Activated CD4-positive, alpha-beta memory T cell treated with anti-CD3 and anti-CD28 coated beads, Interleukin-2, amount 10 ng/mL, durations not matched to agents 7 days and 5 days (primary cell): ENCODE measurements at regions of chr12 and their contacts with region 1.

Region 1: GRCh38 chr12:50986966-50987737 is 34.8 kb downstream of the HIGD1C start:
- DNase-seq: peak; percentile 20
- H3K4me3 Mint-ChIP-seq: no peak overlapping the region
- H3K27ac Mint-ChIP-seq: no peak overlapping the region
- H3K4me1 Mint-ChIP-seq: peaks cover 21% of the 10 kb centered on the region
- H3K27me3 Mint-ChIP-seq: no peaks in the 10 kb centered on the region

Region 2: GRCh38 chr12:50825372-50825838 is 161.7 kb before region 1 on chr12:
- CTCF ChIA-PET with region 1: interaction called, 46 read pairs
- POLR2A ChIA-PET with region 1: interaction called, 3 read pairs
- DNase-seq: no peak
- H3K4me3 Mint-ChIP-seq: no peak overlapping the region
- H3K27ac Mint-ChIP-seq: no peak overlapping the region
- H3K4me1 Mint-ChIP-seq: peaks cover 5% of the 10 kb centered on the region
- H3K27me3 Mint-ChIP-seq: no peaks in the 10 kb centered on the region

Region 3: GRCh38 chr12:50918584-50919316 is 68.4 kb before region 1 on chr12:
- CTCF ChIA-PET with region 1: no interaction called
- POLR2A ChIA-PET with region 1: no interaction called
- DNase-seq: no peak
- H3K4me3 Mint-ChIP-seq: no peak overlapping the region
- H3K27ac Mint-ChIP-seq: no peak overlapping the region
- H3K4me1 Mint-ChIP-seq: peaks cover 5% of the 10 kb centered on the region
- H3K27me3 Mint-ChIP-seq: no peaks in the 10 kb centered on the region

Region 4: DNA sequence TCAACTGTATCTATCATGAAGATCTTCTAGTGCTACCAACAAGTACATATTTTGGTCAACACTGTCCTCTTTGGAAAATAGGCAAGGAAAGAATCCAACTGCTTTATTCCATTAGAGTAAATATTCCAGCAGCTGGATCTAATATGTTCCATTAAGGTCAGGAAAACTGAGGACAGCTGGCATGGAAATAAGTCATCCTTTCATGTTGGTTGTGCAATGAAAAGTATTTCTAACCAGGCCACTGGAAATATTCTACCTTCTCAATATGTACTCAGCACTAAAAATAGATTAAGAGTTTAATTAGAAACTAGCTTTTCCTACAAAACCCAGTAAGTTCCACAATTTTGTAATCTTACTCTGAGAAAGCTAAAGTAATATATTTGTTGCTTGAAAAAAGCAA is 15.2 kb before region 1 on chr12:
- CTCF ChIA-PET with region 1: no interaction called
- POLR2A ChIA-PET with region 1: no interaction called
- DNase-seq: no peak
- H3K4me3 Mint-ChIP-seq: no peak overlapping the region
- H3K27ac Mint-ChIP-seq: no peak overlapping the region
- H3K4me1 Mint-ChIP-seq: no peaks in the 10 kb centered on the region
- H3K27me3 Mint-ChIP-seq: no peaks in the 10 kb centered on the region

Region 5: DNA sequence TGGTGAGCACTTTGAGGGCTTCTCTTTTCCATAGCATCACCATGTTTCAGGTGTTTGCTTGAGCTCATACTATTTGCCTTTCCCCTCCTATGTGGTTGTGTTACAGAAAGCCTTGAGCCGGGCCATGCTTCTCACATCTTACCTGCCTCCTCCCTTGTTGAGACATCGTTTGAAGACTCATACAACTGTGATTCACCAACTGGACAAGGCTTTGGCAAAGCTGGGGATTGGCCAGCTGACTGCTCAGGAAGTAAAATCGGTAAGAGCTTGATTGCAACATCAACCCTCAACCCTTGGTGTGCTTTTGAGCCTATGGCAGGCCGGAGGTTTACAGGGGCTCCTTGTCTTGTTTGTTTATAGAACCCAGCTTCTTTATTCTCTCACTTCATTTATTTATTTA is 69.1 kb after region 1 on chr12:
- CTCF ChIA-PET with region 1: no interaction called
- POLR2A ChIA-PET with region 1: no interaction called
- DNase-seq: no peak
- H3K4me3 Mint-ChIP-seq: no peak overlapping the region
- H3K27ac Mint-ChIP-seq: no peak overlapping the region
- H3K4me1 Mint-ChIP-seq: peaks cover 10% of the 10 kb centered on the region
- H3K27me3 Mint-ChIP-seq: no peaks in the 10 kb centered on the region

Region 6: DNA sequence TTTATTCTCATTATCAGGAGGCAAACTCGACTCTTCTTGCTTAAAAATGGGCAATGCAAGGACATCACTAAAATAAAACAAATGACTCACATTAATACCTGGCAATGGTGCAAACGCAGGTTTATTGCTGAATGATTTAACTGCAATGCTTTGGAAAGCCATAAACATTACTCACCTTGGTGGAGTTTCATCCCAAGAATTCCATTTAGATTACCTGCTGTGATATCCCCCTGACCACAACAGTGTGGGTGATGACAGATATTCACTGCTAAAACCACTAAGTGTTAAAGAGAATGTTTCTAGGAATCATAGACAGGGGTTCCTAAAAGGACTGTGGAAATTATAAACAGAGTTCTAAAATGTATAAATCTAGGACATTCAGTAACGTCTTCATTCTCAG is 131.6 kb after region 1 on chr12:
- CTCF ChIA-PET with region 1: no interaction called
- POLR2A ChIA-PET with region 1: no interaction called
- DNase-seq: no peak
- H3K4me3 Mint-ChIP-seq: no peak overlapping the region
- H3K27ac Mint-ChIP-seq: no peak overlapping the region
- H3K4me1 Mint-ChIP-seq: peaks cover 7% of the 10 kb centered on the region
- H3K27me3 Mint-ChIP-seq: no peaks in the 10 kb centered on the region